Left colon (tissue), 2 donors: ENCODE measurements at regions of chr20 and their contacts with region 1.

Region 1: GRCh38 chr20:49132995-49133478 is 55.1 kb downstream of the STAU1 start:
- DNase-seq: no peak
- ATAC-seq: peak; percentile 85

Region 2: DNA sequence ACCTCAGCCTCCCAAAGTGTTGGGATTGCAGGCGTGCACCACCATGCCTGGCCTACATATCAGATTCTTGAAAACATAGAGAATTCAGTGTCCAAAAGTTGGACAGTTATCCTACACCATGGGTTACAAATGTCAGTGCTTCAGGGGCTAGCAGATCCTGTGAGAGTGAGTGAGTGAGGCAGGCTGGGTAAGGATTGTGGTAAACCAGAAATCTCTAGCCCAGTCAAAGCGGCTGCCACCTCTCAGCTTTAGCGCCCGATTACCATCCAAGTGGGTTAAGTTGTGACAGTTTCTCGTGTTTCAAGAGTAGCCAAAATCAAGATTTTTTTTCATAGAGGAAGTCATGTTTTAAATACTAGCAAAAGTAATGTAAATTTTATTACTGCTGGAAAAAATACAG is 108.8 kb before region 1 on chr20:
- intact Hi-C with region 1: no loop called
- DNase-seq: no peak
- ATAC-seq: no peak

Region 3: DNA sequence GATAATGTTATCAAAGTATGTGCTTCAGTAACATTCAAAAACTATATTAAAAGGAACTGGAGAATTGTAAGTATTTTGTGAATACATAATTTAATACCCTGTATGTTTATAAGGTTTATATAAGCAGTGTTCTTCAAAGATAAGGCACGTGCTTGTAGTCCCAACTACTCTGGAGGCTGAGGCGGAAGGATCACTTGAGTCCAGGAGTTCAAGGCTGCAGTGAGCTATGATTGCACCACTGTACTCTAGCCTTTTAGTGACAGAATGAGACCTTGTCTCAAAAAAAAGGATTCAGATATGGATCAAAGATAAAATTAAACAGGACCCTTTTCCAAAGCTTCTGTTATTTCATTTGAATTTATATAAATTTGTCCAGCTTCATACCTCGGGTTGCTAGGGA is 69.8 kb before region 1 on chr20:
- intact Hi-C with region 1: no loop called
- DNase-seq: no peak
- ATAC-seq: no peak

Region 4: DNA sequence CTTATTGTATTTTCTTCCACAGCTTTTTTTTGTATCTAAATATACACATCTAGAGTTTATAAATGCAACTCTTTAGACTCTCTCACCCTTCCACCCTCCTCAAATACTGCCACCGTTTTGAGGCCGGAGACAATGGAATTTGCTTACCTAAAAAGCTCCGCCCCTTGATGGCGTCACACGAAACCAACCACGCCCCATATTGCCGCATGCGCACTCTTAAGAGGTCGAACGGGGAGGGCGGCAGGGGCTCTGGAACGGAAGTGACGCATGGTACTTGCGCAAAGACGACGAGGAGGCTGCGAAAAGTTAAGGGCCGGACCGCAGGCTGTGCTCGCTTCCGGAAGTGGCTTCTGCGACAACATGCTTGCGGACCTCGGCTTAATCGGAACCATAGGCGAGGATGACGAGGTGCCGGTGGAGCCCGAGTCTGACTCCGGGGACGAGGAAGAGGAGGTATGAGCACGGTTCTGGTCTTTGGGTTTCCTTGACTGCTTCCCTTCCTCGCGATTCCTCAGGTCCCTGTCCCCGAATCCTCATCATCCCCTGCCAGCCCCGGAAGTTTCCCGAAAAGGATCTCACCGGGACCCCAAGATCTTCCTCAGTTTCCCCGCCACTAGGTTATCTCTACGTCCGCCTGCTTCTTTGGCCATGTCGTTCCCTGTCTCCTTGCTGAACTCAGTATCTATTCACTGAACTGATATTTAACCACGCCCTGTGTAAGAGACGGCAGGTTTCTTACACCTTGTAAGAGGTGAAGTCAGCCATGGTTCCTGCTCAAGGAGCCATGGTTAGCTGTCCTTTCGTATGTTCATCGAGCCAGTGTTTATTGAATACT is 86.3 kb after region 1 on chr20 and contains the start of gene DDX27:
- intact Hi-C with region 1: loop called (anchors 5 kb)
- DNase-seq: peak; percentile 97 to 98
- ATAC-seq: peak; percentile 97
- total RNA-seq, gene DDX27: 28.3 TPM